Activated B cell treated with CpG ODN at 0.5 μM for 24 hours (primary cell): ENCODE measurements at regions of chr5 and their contacts with region 1.

Region 1: DNA sequence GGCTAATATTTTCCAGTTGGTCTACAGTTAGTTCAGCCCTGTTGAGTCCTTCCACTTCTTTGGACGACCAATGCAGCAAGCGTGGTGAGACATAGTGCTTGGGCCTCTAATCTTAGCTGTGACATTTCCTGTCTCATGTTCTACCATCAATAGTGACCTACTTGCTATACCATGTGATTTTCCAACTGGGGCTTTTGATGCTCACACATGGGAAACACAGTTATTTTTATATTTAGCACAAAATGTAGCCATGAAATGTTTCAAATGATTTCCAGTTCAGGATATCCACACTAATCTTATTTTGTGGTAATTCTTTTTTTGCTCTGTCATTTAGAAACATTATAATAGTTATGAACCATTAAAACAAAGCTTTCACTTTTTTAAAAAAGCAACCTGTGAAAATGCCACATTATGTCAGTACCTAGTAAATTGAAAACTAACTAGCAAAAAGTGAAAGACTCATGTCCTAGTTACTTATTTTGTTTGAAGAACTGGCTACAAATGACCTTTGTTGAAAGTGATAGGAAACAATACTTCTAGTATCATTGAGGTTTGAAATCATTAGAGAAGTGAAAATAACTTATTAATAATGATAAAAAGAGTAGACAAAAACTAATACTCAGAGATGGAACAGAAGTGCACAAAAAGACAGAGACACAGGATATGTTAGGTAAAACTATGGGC is 18.3 kb downstream of the MARCHF3 start:
- DNase-seq: no peak
- ATAC-seq: peak; percentile 68
- H3K4me3 Mint-ChIP-seq: peak overlapping the region; percentile 28
- H3K27ac Mint-ChIP-seq: peak overlapping the region; percentile 59
- H3K4me1 Mint-ChIP-seq: peaks cover 68% of the 10 kb centered on the region
- H3K27me3 Mint-ChIP-seq: no peaks in the 10 kb centered on the region
- CTCF ChIP-seq: no peak

Region 2: DNA sequence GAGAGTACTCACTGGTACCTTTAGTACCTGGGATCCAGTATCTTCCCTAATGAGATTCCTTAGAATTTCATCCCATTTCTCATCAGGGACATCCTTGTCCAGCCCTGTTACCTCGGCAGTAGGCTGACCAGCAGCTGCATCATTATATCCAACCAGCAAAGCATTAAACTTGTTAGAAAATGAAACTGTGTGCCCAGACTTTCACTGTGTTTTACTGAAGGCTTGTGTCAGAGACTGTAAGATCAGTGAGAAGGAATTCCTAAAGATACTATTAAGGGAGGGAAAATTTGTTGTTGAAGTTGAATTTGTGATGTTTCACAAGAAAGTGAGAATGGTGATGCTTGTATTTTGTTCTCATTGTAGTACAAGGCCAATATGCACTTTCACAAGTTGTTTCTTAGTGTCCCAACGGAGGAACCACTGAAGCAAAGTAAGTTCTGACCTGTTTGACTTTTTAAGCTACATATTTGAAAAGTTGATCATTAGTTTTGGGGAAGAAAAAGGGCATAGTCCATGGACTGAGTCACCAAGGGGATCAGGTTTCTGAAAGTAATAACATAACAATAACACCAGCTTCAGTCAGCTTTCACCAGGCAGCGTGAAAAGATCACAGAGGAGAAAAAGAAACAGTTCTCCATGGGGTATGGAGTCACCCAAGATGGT is 540.1 kb before region 1 on chr5:
- CTCF ChIA-PET with region 1: no interaction called
- POLR2A ChIA-PET with region 1: no interaction called
- intact Hi-C with region 1: no loop called
- DNase-seq: no peak
- ATAC-seq: no peak
- H3K4me3 Mint-ChIP-seq: no peak overlapping the region
- H3K27ac Mint-ChIP-seq: no peak overlapping the region
- H3K4me1 Mint-ChIP-seq: no peaks in the 10 kb centered on the region
- H3K27me3 Mint-ChIP-seq: no peaks in the 10 kb centered on the region
- CTCF ChIP-seq: no peak

Region 3: DNA sequence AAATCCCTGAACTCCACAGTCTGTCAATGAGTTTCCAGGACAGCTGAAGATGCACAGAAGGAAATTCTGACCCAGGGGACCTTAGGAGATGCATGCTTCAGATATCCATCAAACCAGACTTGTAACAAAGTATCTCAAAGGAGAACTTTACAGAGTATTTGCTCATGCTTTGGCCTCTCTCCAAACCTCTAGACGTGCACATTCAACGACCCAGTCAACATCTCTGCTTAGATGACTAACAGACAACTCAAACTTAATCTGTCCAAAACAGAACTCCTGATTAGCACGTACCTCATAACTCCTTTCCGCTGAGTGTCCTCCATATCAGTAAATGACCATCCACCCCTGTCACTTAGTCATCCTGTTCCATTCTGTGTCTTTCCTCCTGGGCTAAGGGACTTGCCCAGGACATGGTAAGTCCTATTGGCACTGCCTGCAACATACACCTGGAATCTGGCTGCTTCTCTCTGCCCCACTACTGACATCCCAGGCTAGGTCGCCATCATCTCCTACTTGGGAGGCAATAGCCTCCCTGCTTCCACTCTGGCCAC is 127.8 kb before region 1 on chr5:
- CTCF ChIA-PET with region 1: no interaction called
- POLR2A ChIA-PET with region 1: no interaction called
- intact Hi-C with region 1: no loop called
- DNase-seq: no peak
- ATAC-seq: no peak
- H3K4me3 Mint-ChIP-seq: no peak overlapping the region
- H3K27ac Mint-ChIP-seq: no peak overlapping the region
- H3K4me1 Mint-ChIP-seq: no peaks in the 10 kb centered on the region
- H3K27me3 Mint-ChIP-seq: no peaks in the 10 kb centered on the region
- CTCF ChIP-seq: no peak

Region 4: DNA sequence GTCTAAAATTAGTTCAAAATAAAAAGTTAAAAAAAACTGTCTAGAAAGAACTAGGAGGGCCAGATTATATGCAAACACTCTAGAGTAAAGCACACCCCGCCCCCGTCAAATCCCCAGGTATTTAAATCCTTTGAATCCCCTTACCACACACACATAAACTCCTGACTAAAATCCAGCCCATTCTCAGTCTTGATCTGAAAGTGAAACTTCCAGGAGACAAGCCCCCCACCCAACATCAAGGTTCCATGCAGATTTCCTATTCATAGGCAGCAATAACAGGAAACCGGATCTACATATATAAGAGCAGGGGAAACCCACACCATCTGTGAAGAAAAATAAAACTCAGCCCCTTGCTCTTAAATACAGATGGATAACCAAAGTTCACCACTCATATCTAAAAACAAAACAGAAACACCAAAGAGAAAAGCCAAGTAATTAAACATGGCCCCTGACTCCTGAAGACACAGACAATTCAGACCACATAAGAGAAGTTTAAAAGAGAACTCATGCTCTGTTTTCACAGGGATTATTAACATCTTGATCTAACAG is 24.0 kb before region 1 on chr5:
- CTCF ChIA-PET with region 1: no interaction called
- POLR2A ChIA-PET with region 1: interaction called, 4 read pairs
- intact Hi-C with region 1: loop called (anchors 2 kb)
- DNase-seq: no peak
- ATAC-seq: peak; percentile 84
- H3K4me3 Mint-ChIP-seq: peak overlapping the region; percentile 82
- H3K27ac Mint-ChIP-seq: peak overlapping the region; percentile 97
- H3K4me1 Mint-ChIP-seq: peaks cover 88% of the 10 kb centered on the region
- H3K27me3 Mint-ChIP-seq: no peaks in the 10 kb centered on the region
- CTCF ChIP-seq: no peak

Region 5: GRCh38 chr5:126998201-126998631 is 13.9 kb before region 1 on chr5:
- CTCF ChIA-PET with region 1: interaction called, 4 read pairs
- POLR2A ChIA-PET with region 1: interaction called, 3 read pairs
- intact Hi-C with region 1: loop called (anchors 1 kb)
- DNase-seq: no peak
- ATAC-seq: peak; percentile 47
- H3K4me3 Mint-ChIP-seq: peak overlapping the region; percentile 4
- H3K27ac Mint-ChIP-seq: peak overlapping the region; percentile 70
- H3K4me1 Mint-ChIP-seq: peaks cover 72% of the 10 kb centered on the region
- H3K27me3 Mint-ChIP-seq: no peaks in the 10 kb centered on the region
- CTCF ChIP-seq: no peak

Region 6: DNA sequence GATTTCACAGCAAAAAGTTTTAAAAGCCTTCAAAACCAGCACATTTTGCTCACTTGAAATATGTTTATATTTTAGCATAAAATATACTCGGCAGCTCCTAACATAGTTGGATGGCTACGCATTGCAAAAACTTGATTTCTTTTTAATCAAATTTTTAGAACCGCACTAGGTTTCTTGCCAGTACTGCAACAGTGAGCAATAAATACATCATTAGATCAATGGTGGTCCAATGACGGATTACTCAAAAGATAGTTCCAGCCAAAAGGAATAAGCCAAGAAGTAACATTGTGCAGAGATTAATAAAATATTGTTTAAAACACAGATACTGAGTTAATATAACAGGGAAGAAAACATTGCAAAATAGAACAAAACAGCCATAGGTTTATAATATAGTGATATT is 12.7 kb after region 1 on chr5:
- CTCF ChIA-PET with region 1: interaction called, 9 read pairs
- POLR2A ChIA-PET with region 1: interaction called, 11 read pairs
- intact Hi-C with region 1: loop called (anchors 1 kb)
- DNase-seq: no peak
- ATAC-seq: no peak
- H3K4me3 Mint-ChIP-seq: no peak overlapping the region
- H3K27ac Mint-ChIP-seq: no peak overlapping the region
- H3K4me1 Mint-ChIP-seq: peaks cover 69% of the 10 kb centered on the region
- H3K27me3 Mint-ChIP-seq: no peaks in the 10 kb centered on the region
- CTCF ChIP-seq: no peak